Tibial artery (tissue), 4 donors: ENCODE measurements at regions of chr12 and their contacts with region 1.

Region 1: GRCh38 chr12:32302218-32303173 is 96.9 kb upstream of the FGD4 start:
- DNase-seq: no peak
- H3K4me3 ChIP-seq: no peak overlapping the region
- H3K27ac ChIP-seq: no peak overlapping the region
- H3K4me1 ChIP-seq: no peaks in the 10 kb centered on the region
- H3K27me3 ChIP-seq: no peaks in the 10 kb centered on the region
- CTCF ChIP-seq: no peak

Region 2: DNA sequence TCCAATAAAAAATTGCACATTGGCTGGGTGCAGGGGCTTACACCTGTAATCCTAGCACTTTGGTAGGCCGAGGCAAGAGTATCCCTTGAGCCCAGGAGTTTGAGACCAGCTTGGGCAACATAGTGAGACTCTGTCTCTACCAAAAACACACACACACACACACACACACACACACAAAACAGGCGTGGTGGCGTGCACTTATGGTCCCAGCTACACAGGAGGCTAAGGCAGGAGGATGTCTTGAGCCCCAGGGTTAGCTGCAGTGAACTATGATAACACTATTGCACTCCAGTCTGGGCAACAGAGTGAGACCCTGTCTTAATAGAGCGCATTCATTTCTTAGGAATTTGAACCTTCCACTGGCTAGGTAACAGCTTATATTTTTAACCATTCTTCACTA is 238.7 kb before region 1 on chr12:
- intact Hi-C with region 1: loop called (anchors 2 kb)
- DNase-seq: no peak
- H3K4me3 ChIP-seq: no peak overlapping the region
- H3K27ac ChIP-seq: no peak overlapping the region
- H3K4me1 ChIP-seq: no peaks in the 10 kb centered on the region
- H3K27me3 ChIP-seq: no peaks in the 10 kb centered on the region
- CTCF ChIP-seq: no peak

Region 3: GRCh38 chr12:32482226-32482625 is 179.7 kb after region 1 on chr12:
- intact Hi-C with region 1: no loop called
- DNase-seq: no peak
- H3K4me3 ChIP-seq: no peak overlapping the region
- H3K27ac ChIP-seq: no peak overlapping the region
- H3K4me1 ChIP-seq: no peaks in the 10 kb centered on the region
- H3K27me3 ChIP-seq: no peaks in the 10 kb centered on the region
- CTCF ChIP-seq: no peak